Panc1 (cell line): ENCODE measurements at regions of chr6 and their contacts with region 1.

Region 1: DNA sequence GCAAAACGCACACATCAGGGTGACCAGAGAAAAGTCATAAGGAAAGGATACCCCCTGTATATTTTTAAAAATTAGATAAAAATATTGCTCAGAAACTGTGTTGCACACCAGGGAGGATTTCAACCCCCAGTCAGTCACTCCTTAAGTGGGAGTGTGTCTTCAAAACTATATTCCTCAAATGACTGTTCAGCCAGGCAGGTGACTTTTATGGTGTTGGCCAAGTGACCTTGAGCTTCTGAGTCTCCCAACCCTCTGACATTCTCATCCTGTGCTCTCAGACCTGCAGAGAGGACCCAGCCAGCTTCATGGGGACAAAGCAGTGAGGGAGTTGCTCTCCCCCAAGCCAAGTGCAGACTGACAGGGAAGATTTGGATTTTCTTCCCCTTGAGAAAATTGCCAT is 311.9 kb upstream of the JARID2 start:
- DNase-seq: no peak
- ATAC-seq: no peak
- H3K4me3 ChIP-seq: no peak overlapping the region
- H3K27ac ChIP-seq: no peak overlapping the region
- H3K4me1 ChIP-seq: no peaks in the 10 kb centered on the region
- H3K27me3 ChIP-seq: no peaks in the 10 kb centered on the region
- CTCF ChIP-seq: no peak

Region 2: DNA sequence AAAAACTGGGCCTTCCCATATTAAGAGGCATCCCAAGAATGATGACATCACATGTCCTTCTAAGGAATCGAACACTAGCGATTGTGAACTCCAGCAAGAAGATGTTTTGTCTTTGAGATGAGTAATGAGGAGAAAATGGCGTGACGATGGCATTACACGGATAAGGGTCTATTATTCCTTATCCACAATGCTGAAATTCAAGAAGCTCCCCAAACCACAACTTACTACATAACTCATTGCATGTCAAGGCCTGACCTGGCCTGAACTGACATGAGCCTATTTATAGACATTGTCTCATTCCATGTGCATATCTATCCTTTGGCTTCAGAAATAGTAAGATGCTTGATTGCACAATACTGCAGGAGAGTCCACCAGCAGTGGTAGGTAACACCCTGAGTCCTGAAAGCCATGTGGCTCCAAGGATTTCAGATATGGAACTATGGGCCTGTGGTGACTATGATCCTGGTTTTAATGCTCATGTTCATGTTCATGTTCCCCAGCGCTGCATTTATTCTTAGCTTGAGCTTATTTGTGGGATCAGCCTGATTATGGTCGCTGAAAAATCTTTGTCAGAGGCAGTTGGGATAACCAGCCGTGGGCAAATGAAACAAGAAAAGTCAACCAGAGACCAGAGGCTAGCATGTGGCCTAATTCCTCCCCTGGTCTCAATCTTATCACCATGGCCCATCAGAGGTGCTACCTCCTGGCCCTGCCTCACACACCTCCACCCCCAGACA is 128.7 kb after region 1 on chr6:
- CTCF ChIA-PET with region 1: no interaction called
- POLR2A ChIA-PET with region 1: no interaction called
- in situ Hi-C with region 1: no loop called
- intact Hi-C with region 1: no loop called
- DNase-seq: no peak
- ATAC-seq: no peak
- H3K4me3 ChIP-seq: no peak overlapping the region
- H3K27ac ChIP-seq: no peak overlapping the region
- H3K4me1 ChIP-seq: no peaks in the 10 kb centered on the region
- H3K27me3 ChIP-seq: no peaks in the 10 kb centered on the region
- CTCF ChIP-seq: no peak

Region 3: DNA sequence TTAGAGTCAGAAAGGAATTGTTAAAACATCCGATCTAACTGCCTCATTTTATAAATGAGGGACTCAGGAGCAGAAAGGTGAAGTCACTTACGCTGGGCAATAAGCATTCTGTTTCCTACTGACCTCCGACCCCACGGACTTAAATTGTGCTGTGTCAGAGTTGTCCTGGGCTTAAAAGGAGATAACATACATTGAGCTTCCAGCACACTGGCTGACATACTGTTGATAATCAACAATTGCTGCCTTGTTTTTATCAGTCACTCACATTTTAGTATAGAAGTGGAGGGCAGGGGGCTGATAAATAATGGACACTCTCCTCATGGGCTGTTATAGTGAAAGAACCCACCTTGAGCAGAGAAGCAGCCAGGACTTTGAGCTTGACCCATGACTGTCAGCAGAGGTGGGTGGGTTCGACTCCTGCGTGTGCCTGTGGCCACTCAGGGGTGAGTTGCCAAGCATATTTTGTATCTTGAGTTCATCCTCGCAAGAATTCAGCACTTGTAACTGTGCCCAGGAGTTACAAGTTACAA is 145.3 kb after region 1 on chr6:
- CTCF ChIA-PET with region 1: no interaction called
- POLR2A ChIA-PET with region 1: interaction called, 16 read pairs
- in situ Hi-C with region 1: no loop called
- intact Hi-C with region 1: no loop called
- DNase-seq: no peak
- ATAC-seq: no peak
- H3K4me3 ChIP-seq: no peak overlapping the region
- H3K27ac ChIP-seq: no peak overlapping the region
- H3K4me1 ChIP-seq: no peaks in the 10 kb centered on the region
- H3K27me3 ChIP-seq: no peaks in the 10 kb centered on the region
- CTCF ChIP-seq: no peak